Mammary epithelial cell (primary cell): ENCODE measurements at regions of chr17 and their contacts with region 1.

Region 1: GRCh38 chr17:64938925-64939474 is 19.7 kb upstream of the LRRC37A3 start:
- DNase-seq: no peak
- H3K4me3 ChIP-seq: no peak overlapping the region
- H3K27ac ChIP-seq: no peak overlapping the region
- H3K4me1 ChIP-seq: no peaks in the 10 kb centered on the region
- H3K27me3 ChIP-seq: peaks cover 5% of the 10 kb centered on the region
- CTCF ChIP-seq: peak; percentile 59 to 69

Region 2: GRCh38 chr17:64736804-64737492 is 202.1 kb before region 1 on chr17:
- CTCF ChIA-PET with region 1: no interaction called
- dilution Hi-C with region 1: no loop called
- in situ Hi-C with region 1: no loop called
- intact Hi-C with region 1: no loop called
- DNase-seq: peak; percentile 46
- H3K4me3 ChIP-seq: no peak overlapping the region
- H3K27ac ChIP-seq: no peak overlapping the region
- H3K4me1 ChIP-seq: peaks cover 2% of the 10 kb centered on the region
- H3K27me3 ChIP-seq: no peaks in the 10 kb centered on the region
- CTCF ChIP-seq: peak; percentile 46 to 60

Region 3: DNA sequence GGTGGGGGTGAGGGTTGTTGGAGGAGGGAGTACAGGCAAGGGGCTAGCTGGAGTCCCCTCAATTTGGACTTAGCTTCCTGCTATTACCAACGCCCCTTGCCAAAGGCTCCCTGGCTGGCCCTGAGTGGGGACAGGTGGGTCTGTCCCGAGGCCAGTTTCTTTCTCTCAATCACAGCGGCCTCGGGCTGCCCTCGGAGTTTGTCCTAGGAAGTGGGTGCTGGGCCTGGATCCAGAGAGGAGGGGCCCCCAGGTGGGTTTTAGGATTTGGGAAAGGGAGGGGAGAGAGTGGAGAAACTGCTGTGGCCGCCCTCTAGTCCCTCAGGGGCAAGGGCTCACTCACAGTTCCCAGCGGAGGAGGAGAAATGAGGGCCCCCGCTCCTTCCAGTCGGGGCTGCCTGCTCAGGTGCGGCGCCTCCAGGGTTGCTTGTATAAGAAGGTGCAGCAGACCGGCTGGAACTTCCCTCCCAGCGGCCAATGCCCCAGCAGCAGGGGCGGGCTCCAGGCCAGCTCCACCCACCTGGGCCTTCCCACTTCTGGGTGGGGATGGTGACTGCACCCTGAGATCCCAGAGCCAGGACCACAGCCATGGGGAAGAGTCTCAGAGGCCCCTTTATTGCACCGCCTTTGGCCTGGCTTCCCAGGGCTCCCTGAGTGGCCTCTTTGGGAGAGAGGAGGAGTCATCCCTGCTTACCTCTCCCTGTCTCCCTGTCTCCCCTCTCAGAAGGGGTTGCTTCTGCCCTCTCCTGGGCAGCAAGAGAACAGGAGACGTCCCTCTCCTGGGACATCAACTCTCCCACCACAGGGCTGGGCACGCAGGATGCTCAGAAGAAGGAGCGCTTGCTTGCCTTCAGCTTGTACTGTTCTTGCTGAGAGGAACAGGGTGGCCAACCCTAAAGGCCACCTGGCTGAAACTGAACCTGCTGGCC is 164.9 kb before region 1 on chr17:
- CTCF ChIA-PET with region 1: interaction called, 3 read pairs
- dilution Hi-C with region 1: no loop called
- in situ Hi-C with region 1: loop called in 1 of 2 experiments (anchors 25 kb)
- intact Hi-C with region 1: loop called (anchors 10 kb)
- DNase-seq: peak; percentile 83
- H3K4me3 ChIP-seq: peak overlapping the region; percentile 41 to 50 (median 49)
- H3K27ac ChIP-seq: peak overlapping the region; percentile 54
- H3K4me1 ChIP-seq: peaks cover 17% of the 10 kb centered on the region
- H3K27me3 ChIP-seq: no peaks in the 10 kb centered on the region
- CTCF ChIP-seq: peak; percentile 53 to 66

Region 4: GRCh38 chr17:64781014-64781753 is 157.8 kb before region 1 on chr17:
- CTCF ChIA-PET with region 1: interaction called, 3 read pairs
- dilution Hi-C with region 1: no loop called
- in situ Hi-C with region 1: loop called in 1 of 2 experiments (anchors 25 kb)
- intact Hi-C with region 1: loop called (anchors 10 kb)
- DNase-seq: peak; percentile 42
- H3K4me3 ChIP-seq: peak overlapping the region; percentile 48 to 54 (median 53)
- H3K27ac ChIP-seq: no peak overlapping the region
- H3K4me1 ChIP-seq: peaks cover 28% of the 10 kb centered on the region
- H3K27me3 ChIP-seq: no peaks in the 10 kb centered on the region
- CTCF ChIP-seq: no peak

Region 5: GRCh38 chr17:65055348-65056261 is 116.6 kb after region 1 on chr17:
- CTCF ChIA-PET with region 1: no interaction called
- dilution Hi-C with region 1: no loop called
- in situ Hi-C with region 1: no loop called
- intact Hi-C with region 1: no loop called
- DNase-seq: peak; percentile 47
- H3K4me3 ChIP-seq: peak overlapping the region; percentile 64 to 84 (median 83)
- H3K27ac ChIP-seq: peak overlapping the region; percentile 84
- H3K4me1 ChIP-seq: peaks cover 32% of the 10 kb centered on the region
- H3K27me3 ChIP-seq: no peaks in the 10 kb centered on the region
- CTCF ChIP-seq: no peak